AG04449 (cell line): ENCODE measurements at regions of chr3 and their contacts with region 1.

Region 1: GRCh38 chr3:46078712-46079400 is 51.6 kb upstream of the XCR1 start:
- DNase-seq: peak; percentile 80
- H3K4me3 ChIP-seq: no peak overlapping the region
- CTCF ChIP-seq: peak; percentile 91

Region 2: DNA sequence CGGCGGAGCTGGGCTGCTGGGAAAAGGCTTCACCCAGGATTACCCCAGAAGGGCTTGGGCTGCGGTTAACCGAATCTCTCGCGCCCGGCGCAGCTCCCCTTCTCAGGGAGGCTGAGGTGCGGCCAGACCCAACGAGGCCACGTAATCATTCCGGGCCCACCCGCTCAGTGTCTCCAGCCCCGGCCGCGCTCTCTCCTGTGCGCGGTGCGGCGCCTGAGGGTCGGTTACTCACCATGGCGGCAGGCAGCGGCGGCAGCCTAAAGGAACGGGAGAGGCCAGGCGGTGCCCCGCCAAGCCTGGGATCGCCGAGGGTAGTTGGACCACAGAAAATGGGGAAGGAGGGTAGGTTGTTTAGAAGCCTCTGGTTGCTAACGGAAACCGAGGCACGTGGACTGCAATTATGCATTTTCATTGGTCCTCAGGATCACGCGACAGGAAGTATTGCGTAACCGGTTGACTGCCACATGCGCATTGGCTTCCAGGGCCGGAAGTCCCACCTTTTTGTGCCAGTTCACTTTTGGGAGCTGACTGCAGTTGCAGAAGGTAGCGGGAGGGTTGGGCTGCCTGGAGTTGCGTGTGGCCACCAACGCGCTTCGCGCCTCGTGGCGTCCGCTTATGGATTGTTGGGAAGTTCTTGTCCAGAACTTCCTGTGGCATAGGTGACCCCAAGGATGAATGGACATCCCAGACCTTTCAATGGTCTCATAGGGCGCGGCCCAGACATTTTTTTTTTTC is 236.9 kb before region 1 on chr3 and contains the start of gene LZTFL1:
- CTCF ChIA-PET with region 1: interaction called, 15 read pairs
- POLR2A ChIA-PET with region 1: no interaction called
- DNase-seq: peak; percentile 77
- H3K4me3 ChIP-seq: peak within 1 kb of the TSS; percentile 87
- CTCF ChIP-seq: no peak

Region 3: DNA sequence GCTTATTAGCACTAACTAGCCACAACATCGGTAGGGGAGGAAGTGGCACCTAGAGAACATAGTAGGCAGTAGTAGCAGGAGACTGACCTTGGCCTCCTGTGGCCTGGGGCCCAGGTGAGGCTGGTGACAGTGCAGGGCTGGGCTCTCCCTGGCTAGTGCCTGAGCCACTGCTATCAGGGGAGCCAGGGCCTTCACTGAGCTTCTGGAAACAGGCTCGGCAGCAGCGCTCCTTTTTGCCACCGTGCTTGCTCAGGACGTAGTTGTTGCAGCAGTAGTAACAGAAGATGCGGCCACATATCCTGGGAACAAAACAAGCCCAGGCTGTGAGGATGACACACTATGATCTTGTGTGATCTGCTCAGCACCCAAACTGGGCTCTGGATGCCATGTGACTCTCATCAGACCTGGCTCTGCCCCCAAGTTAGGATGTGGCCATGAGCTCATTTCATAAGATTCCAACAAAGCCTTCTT is 120.5 kb before region 1 on chr3:
- CTCF ChIA-PET with region 1: interaction called, 918 read pairs
- POLR2A ChIA-PET with region 1: no interaction called
- DNase-seq: no peak
- H3K4me3 ChIP-seq: no peak overlapping the region
- CTCF ChIP-seq: no peak

Region 4: DNA sequence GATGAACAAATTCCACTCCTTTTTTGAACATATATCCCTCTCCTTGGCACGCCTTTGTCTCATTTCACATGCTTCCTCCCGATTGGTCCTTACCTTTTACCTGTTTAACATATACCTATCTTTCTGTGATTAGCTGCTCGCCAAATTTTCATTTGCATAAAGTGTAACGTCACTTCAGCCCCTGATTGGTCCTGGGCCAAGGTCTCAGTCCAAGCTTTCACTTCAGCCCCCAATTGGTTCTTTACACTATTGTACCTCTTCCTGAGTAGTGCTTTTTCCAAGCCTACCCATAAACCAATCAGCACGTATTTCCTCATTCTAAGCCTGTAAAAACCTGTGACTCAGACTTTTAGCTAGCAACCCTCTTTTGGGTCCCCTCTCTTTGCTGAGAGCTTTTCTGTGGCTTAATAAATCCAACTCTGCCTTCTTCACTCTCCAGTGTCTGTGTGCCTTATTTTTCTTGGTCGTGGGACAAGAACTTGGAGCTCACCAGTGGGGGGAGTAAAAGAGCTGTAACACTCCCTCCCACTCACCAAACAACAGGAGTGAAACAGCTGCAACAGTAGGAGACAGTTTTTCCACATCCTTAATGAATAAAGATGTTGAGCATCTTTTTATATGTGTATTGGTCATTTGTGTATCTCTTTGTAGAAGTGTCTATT is 51.0 kb before region 1 on chr3:
- CTCF ChIA-PET with region 1: interaction called, 11 read pairs
- POLR2A ChIA-PET with region 1: no interaction called
- DNase-seq: no peak
- H3K4me3 ChIP-seq: no peak overlapping the region
- CTCF ChIP-seq: no peak

Region 5: GRCh38 chr3:46089237-46090011 is 10.6 kb after region 1 on chr3:
- CTCF ChIA-PET with region 1: interaction called, 63 read pairs
- POLR2A ChIA-PET with region 1: no interaction called
- DNase-seq: peak; percentile 52
- H3K4me3 ChIP-seq: no peak overlapping the region
- CTCF ChIP-seq: no peak